WTC11 (cell line): ENCODE measurements at regions of chr1 and their contacts with region 1.

Region 1: DNA sequence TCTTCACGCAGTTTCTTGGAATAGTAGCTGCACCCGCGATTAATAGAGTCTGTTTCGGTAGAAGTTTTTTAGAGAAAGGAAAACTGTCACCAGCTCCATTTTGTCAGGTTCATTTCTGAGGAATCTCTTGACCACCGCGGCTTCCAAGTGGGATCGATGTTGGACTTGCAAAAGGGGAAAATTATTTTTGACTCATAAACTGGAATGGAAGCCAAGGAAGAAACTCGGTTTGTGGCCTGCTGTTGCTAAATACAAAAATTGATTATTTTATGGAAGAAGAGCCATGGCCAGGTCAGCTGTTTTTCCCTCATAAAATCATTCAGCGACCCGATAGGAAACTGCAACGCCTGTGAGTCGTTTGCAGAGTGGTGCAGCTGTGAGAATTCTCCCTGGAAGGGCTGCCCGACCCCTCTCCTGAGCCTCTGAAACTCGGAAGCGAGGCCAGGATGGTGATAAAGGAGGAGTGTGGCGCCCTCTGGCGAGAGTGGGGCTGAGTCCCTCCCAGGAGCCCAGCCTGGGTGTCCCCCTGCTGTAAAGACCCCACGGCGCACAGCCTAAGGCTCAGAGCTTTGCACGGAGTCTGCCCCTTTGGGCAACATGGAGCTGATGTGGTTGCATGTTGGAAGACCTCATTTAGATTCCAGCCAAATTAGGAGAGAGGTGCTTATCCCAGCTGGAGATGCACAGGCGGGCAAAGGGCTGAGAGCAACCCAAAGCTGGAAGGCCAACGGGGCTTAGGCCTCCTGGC is 83.6 kb upstream of the SLC25A33 start:
- DNase-seq: peak; percentile 94
- ATAC-seq: peak; percentile 98
- H3K4me3 Mint-ChIP-seq: no peak overlapping the region
- H3K27ac Mint-ChIP-seq: no peak overlapping the region; the same call in 1 of the 2 replicates
- H3K4me1 Mint-ChIP-seq: 0 out of 2 replicates have a peak, but pooled peaks cover 4% of the 10 kb centered on the region
- H3K27me3 Mint-ChIP-seq: no peaks in the 10 kb centered on the region
- CTCF ChIP-seq: peak; percentile 59

Region 2: DNA sequence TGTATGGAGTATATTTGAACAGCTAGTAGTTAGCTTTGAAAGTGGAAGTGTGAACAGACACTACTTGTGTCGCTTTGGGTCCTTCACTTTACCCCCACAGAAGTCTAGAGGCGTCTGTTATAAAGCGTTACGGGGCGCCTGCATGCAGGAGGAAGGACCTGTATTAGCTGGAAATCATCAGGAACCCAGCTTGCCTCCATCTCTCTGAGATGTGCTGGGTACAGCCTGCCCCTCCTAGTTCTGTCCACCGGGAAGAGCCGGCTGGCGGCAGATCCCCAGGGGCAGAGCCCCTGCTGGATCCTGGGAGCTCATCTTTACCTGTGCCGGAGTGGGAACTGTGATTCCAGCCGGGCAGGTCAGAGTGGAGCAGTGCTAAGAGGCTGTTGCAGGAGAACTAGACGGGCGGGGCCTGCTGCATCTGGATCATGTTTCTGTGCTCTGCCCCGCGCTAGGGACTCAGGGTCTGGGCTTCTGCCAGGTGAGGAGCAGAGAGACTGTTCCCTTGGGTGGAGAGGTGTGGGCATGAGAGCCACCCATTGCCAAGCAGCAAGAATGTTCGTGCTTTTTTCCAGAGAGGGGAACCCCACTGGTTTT is 185.3 kb before region 1 on chr1:
- CTCF ChIA-PET with region 1: interaction called, 50 read pairs
- POLR2A ChIA-PET with region 1: no interaction called
- DNase-seq: no peak
- ATAC-seq: peak; percentile 21
- H3K4me3 Mint-ChIP-seq: no peak overlapping the region
- H3K27ac Mint-ChIP-seq: no peak overlapping the region
- H3K4me1 Mint-ChIP-seq: peaks cover 11% of the 10 kb centered on the region
- H3K27me3 Mint-ChIP-seq: no peaks in the 10 kb centered on the region; the same call in 1 of the 2 replicates
- CTCF ChIP-seq: no peak

Region 3: GRCh38 chr1:9292361-9293240 is 163.1 kb before region 1 on chr1 and contains the start of gene SPSB1:
- CTCF ChIA-PET with region 1: interaction called, 120 read pairs
- POLR2A ChIA-PET with region 1: interaction called, 7 read pairs
- DNase-seq: peak; percentile 60
- ATAC-seq: peak; percentile 71
- H3K4me3 Mint-ChIP-seq: peak within 1 kb of the TSS; percentile 70
- H3K27ac Mint-ChIP-seq: no peak within 1 kb of the TSS
- H3K4me1 Mint-ChIP-seq: peaks cover 12% of the 10 kb centered on the region
- H3K27me3 Mint-ChIP-seq: peaks cover 8% of the 10 kb centered on the region
- CTCF ChIP-seq: no peak
- total RNA-seq, gene SPSB1: 4.3 to 5.5 TPM (median 4.6 TPM) in 3 replicates

Region 4: GRCh38 chr1:9352377-9353134 is 103.1 kb before region 1 on chr1:
- CTCF ChIA-PET with region 1: interaction called, 19 read pairs
- POLR2A ChIA-PET with region 1: no interaction called
- DNase-seq: peak; percentile 53
- ATAC-seq: peak; percentile 42; the same call in 1 of the 2 replicates
- H3K4me3 Mint-ChIP-seq: no peak overlapping the region
- H3K27ac Mint-ChIP-seq: no peak overlapping the region
- H3K4me1 Mint-ChIP-seq: peaks cover 12% of the 10 kb centered on the region
- H3K27me3 Mint-ChIP-seq: no peaks in the 10 kb centered on the region; the same call in 1 of the 2 replicates
- CTCF ChIP-seq: no peak

Region 5: GRCh38 chr1:9399510-9400424 is 55.9 kb before region 1 on chr1:
- CTCF ChIA-PET with region 1: interaction called, 14 read pairs
- POLR2A ChIA-PET with region 1: no interaction called
- DNase-seq: no peak
- ATAC-seq: no peak
- H3K4me3 Mint-ChIP-seq: no peak overlapping the region
- H3K27ac Mint-ChIP-seq: no peak overlapping the region
- H3K4me1 Mint-ChIP-seq: no peaks in the 10 kb centered on the region
- H3K27me3 Mint-ChIP-seq: peaks cover 4% of the 10 kb centered on the region; the same call in 1 of the 2 replicates
- CTCF ChIP-seq: no peak

Region 6: GRCh38 chr1:9422911-9423505 is 32.7 kb before region 1 on chr1:
- CTCF ChIA-PET with region 1: interaction called, 12 read pairs
- POLR2A ChIA-PET with region 1: no interaction called
- DNase-seq: no peak
- ATAC-seq: no peak
- H3K4me3 Mint-ChIP-seq: no peak overlapping the region
- H3K27ac Mint-ChIP-seq: no peak overlapping the region
- H3K4me1 Mint-ChIP-seq: no peaks in the 10 kb centered on the region; the same call in 1 of the 2 replicates
- H3K27me3 Mint-ChIP-seq: no peaks in the 10 kb centered on the region
- CTCF ChIP-seq: no peak

Region 7: DNA sequence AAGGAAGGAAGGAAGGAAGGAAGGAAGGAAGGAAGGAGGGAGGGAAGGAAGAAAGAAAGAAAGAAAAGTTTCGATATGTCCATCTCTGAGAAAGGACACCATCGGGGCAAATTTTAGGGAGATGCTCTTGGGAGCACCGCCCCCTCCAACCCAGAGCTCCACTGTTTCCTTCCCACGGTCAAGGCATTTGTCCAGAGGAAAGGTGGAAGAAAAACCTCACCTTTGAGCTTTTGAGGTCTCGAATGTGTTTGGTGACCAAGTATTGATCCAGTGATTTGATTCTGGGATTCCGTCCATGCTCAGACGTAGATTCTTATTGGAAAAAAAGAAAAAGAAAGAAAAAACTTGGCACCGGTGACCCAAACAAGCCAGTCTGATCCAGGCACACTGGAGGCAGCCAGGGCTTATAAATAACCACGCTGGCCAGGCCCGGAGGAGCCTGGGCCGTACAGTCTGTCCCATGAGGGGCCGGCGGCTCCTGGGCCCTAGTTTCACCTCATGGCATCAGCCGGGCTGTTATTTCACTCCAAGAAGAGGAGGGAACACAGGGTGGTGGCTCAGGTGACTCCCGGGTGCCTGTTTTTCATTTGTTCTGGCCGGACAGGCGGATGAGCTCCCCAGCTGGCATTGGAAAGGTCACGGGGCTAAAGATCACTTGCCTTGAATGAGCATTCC is 47.5 kb after region 1 on chr1:
- CTCF ChIA-PET with region 1: no interaction called
- POLR2A ChIA-PET with region 1: no interaction called
- DNase-seq: no peak
- ATAC-seq: no peak
- H3K4me3 Mint-ChIP-seq: no peak overlapping the region
- H3K27ac Mint-ChIP-seq: no peak overlapping the region
- H3K4me1 Mint-ChIP-seq: no peaks in the 10 kb centered on the region
- H3K27me3 Mint-ChIP-seq: peaks cover 5% of the 10 kb centered on the region; the same call in 1 of the 2 replicates
- CTCF ChIP-seq: no peak

Region 8: GRCh38 chr1:9626201-9626608 is 170.5 kb after region 1 on chr1:
- CTCF ChIA-PET with region 1: no interaction called
- POLR2A ChIA-PET with region 1: no interaction called
- DNase-seq: no peak
- ATAC-seq: no peak
- H3K4me3 Mint-ChIP-seq: no peak overlapping the region
- H3K27ac Mint-ChIP-seq: no peak overlapping the region
- H3K4me1 Mint-ChIP-seq: peaks cover 5% of the 10 kb centered on the region
- H3K27me3 Mint-ChIP-seq: peaks cover 19% of the 10 kb centered on the region
- CTCF ChIP-seq: no peak